Caki2 (cell line): ENCODE measurements at regions of chr22 and their contacts with region 1.

Region 1: GRCh38 chr22:35582861-35583670 is 34.1 kb downstream of the MB start:
- DNase-seq: peak; percentile 81

Region 2: GRCh38 chr22:35399678-35400334 is 183.3 kb before region 1 on chr22 and contains the start of gene MCM5:
- in situ Hi-C with region 1: loop called (anchors 10 kb)
- DNase-seq: peak; percentile 98
- total RNA-seq, gene MCM5: 134 and 177 TPM in 2 replicates

Region 3: DNA sequence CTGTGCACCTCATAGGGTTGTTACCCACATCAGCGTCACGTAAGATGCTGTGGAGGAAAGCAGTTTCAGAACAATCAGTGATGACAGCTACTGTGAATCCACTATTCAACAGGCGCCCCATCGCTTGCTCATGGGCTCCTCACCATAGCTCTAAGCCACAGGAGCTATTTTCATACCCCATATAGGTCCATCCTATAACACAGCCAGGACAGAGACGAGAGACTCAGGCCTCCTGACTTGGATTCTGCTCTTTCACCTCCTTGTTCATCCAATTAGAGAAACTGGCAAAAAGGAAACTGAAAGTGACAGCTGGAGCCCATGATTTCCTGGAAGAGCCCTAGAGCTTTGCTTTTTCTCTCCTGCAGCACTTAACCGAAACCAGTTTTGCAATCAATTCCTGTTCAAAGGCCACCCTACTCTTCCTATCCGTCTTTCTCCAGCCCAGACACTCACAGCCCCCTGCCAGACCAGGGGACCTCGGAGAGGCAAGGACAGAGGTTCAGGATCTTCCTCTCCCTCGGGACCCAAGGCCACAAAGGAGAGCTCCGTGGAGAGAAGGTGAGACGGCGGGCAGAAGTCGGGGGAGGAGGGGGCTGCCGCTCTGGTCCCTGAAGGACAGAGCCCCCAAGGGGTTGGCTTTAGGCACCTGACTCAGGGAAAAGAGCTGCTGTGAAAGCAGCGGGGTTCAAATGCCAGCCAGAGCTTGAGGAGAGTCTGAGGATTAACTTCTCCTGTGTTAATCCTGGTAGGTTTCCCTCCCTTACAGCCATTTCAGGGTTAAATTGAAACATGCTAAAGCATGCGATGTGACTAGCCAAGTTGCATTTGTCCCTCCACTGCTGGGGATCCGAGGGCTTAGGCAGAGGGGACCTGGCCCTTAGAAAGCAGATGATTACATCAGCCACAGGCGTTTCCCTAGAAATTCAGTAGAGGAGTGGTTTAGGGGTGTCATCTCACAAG is 65.3 kb after region 1 on chr22 and contains the start of gene APOL6:
- in situ Hi-C with region 1: no loop called
- DNase-seq: peak; percentile 83
- total RNA-seq, gene APOL6: 21.3 and 21.5 TPM in 2 replicates